ENCODE measurements at regions of chr11 and their contacts with region 1.

Region 1: GRCh38 chr11:59283825-59284772 is 71.4 kb upstream of the MPEG1 start:
- DNase-seq: peak; percentile 41
- H3K4me3 ChIP-seq: no peak overlapping the region
- H3K27ac ChIP-seq: no peak overlapping the region
- H3K4me1 ChIP-seq: no peaks in the 10 kb centered on the region
- H3K27me3 ChIP-seq: no peaks in the 10 kb centered on the region
- CTCF ChIP-seq: peak; percentile 48 to 87 (median 76)
- POLR2A ChIP-seq: no peak

Region 2: GRCh38 chr11:59171508-59172322 is 112.4 kb before region 1 on chr11 and contains the start of gene DTX4:
- intact Hi-C with region 1: loop called (anchors 5 kb)
- DNase-seq: peak; percentile 91
- H3K4me3 ChIP-seq: peak within 1 kb of the TSS; percentile 56 to 64
- H3K27ac ChIP-seq: peak within 1 kb of the TSS; percentile 52 to 70
- H3K4me1 ChIP-seq: peaks cover 5% of the 10 kb centered on the region
- H3K27me3 ChIP-seq: no peaks in the 10 kb centered on the region
- CTCF ChIP-seq: peak; percentile 84 to 98 (median 96)
- POLR2A ChIP-seq: peak; percentile 48
- total RNA-seq, gene DTX4: 6.9 to 10.7 TPM

Region 3: GRCh38 chr11:59475176-59475575 is 191.1 kb after region 1 on chr11:
- intact Hi-C with region 1: no loop called
- DNase-seq: no peak
- H3K4me3 ChIP-seq: no peak overlapping the region
- H3K27ac ChIP-seq: no peak overlapping the region
- H3K4me1 ChIP-seq: no peaks in the 10 kb centered on the region
- H3K27me3 ChIP-seq: no peaks in the 10 kb centered on the region
- CTCF ChIP-seq: no peak
- POLR2A ChIP-seq: no peak

Region 4: GRCh38 chr11:59787816-59788215 is 503.7 kb after region 1 on chr11:
- intact Hi-C with region 1: no loop called
- DNase-seq: no peak
- H3K4me3 ChIP-seq: no peak overlapping the region
- H3K27ac ChIP-seq: no peak overlapping the region
- H3K4me1 ChIP-seq: peaks cover 2% of the 10 kb centered on the region
- H3K27me3 ChIP-seq: no peaks in the 10 kb centered on the region
- CTCF ChIP-seq: no peak
- POLR2A ChIP-seq: no peak